Stomach (tissue), 19 donors: ENCODE measurements at regions of chr12 and their contacts with region 1.

Region 1: GRCh38 chr12:75526655-75527511 is 15.5 kb upstream of the KRR1 start:
- DNase-seq: peak in 1 of 2 donors; percentile 81
- H3K4me3 ChIP-seq: no peak overlapping the region
- H3K27ac ChIP-seq: no peak overlapping the region
- H3K4me1 ChIP-seq: peaks cover 0 to 6% (median 3%) of the 10 kb centered on the region in 4 donors
- H3K27me3 ChIP-seq: no peaks in the 10 kb centered on the region
- CTCF ChIP-seq: peak in 5 of 7 experiments; percentile 23 to 70 (median 63)
- EP300 ChIP-seq: no peak
- POLR2A ChIP-seq: no peak

Region 2: DNA sequence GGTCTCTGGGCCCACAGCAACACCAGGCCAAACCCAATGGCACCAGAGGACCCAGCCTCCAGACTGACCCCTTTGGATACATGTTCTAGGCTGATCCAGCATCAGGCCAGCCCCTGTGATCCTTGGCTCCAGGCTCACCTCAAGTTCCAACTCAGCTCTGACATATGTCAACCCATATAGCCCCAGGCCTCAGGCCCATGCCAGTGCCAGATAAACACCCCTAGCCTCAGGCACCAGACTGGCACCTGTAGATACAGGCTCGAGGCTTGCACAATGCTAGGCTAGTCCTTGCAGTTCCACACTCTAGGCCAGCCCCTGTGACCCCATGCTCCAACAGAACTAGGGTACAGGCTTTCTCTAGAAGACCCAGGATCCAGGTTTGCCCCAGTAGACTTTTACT is 604.8 kb before region 1 on chr12:
- intact Hi-C with region 1: no loop called
- DNase-seq: no peak
- H3K4me3 ChIP-seq: no peak overlapping the region
- H3K27ac ChIP-seq: no peak overlapping the region
- H3K4me1 ChIP-seq: no peaks in the 10 kb centered on the region
- H3K27me3 ChIP-seq: no peaks in the 10 kb centered on the region
- CTCF ChIP-seq: no peak
- EP300 ChIP-seq: no peak
- POLR2A ChIP-seq: no peak

Region 3: GRCh38 chr12:76037130-76038103 is 510.5 kb after region 1 on chr12:
- intact Hi-C with region 1: loop called (anchors 5 kb)
- DNase-seq: peak in 1 of 2 donors; percentile 89
- H3K4me3 ChIP-seq: no peak overlapping the region
- H3K27ac ChIP-seq: no peak overlapping the region
- H3K4me1 ChIP-seq: peaks cover 0 to 33% (median 18%) of the 10 kb centered on the region in 4 donors
- H3K27me3 ChIP-seq: no peaks in the 10 kb centered on the region
- CTCF ChIP-seq: peak in 5 of 7 experiments; percentile 73 to 80 (median 74)
- EP300 ChIP-seq: no peak
- POLR2A ChIP-seq: no peak